Naive thymus-derived CD4-positive, alpha-beta T cell (primary cell): ENCODE measurements at regions of chr14 and their contacts with region 1.

Region 1: GRCh38 chr14:95157327-95158189 is at the start of gene DICER1:
- DNase-seq: peak; percentile 84 to 98 (median 93)
- ATAC-seq: peak; percentile 92
- H3K4me3 ChIP-seq: peak within 1 kb of the TSS; percentile 87
- H3K4me3 Mint-ChIP-seq: peak within 1 kb of the TSS; percentile 94 to 99 (median 98)
- H3K27ac ChIP-seq: peak within 1 kb of the TSS; percentile 82
- H3K27ac Mint-ChIP-seq: peak within 1 kb of the TSS; percentile 97 to 100 (median 99)
- H3K4me1 ChIP-seq: peaks cover 31 to 36% of the 10 kb centered on the region in 2 donors
- H3K4me1 Mint-ChIP-seq: peaks cover 32 to 55% (median 42%) of the 10 kb centered on the region in 7 donors
- H3K27me3 ChIP-seq: no peaks in the 10 kb centered on the region
- H3K27me3 Mint-ChIP-seq: no peaks in the 10 kb centered on the region
- total RNA-seq, gene DICER1: 61.1 to 78.2 (median 67.4) TPM

Region 2: DNA sequence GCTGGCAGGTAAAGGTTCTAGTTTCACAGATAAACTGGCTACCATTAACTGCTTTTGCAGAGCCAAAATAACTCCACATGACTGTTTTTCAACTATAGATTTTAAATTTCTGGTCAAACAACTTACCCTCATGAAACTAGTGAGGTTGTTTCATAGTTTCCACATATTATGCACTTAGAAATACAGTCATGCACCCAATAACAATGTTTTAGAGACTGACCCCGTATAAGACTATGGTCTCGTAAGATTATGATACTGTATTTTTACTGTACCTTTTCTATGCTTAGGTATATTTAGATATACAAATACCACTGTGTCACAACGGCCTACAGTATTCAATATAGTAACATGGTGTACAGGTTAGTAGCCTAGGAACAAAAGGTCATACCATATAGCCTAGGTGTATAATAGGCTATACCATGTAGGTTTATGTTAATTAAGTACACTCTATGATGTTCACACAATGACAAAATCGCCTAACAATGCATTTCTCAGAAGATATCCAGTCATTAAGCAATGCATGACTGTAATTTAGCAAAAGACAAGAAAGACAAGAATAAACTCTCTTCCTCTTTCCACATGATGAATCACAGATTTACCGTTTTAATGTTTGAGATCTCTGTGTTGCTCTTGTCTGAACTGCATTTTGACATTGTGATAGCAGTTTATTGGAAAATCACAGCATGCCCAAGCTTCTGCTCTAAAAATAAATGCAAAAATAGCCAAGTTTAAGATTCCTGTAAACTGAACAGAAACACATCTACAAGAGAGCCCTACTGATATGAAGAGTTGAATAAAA is 17.3 kb before region 1 on chr14:
- CTCF ChIA-PET with region 1: no interaction called
- POLR2A ChIA-PET with region 1: interaction called, 3 read pairs
- intact Hi-C with region 1: loop called in 1 of 2 experiments (anchors 2 kb)
- DNase-seq: no peak
- ATAC-seq: peak; percentile 53
- H3K4me3 ChIP-seq: no peak overlapping the region
- H3K4me3 Mint-ChIP-seq: peak overlapping the region in 3 of 10 donors; percentile 20 to 44 (median 26)
- H3K27ac ChIP-seq: no peak overlapping the region
- H3K27ac Mint-ChIP-seq: peak overlapping the region in 1 of 9 donors; percentile 12
- H3K4me1 ChIP-seq: peaks cover 4 to 29% of the 10 kb centered on the region in 2 donors
- H3K4me1 Mint-ChIP-seq: peaks cover 40 to 95% (median 91%) of the 10 kb centered on the region in 7 donors
- H3K27me3 ChIP-seq: no peaks in the 10 kb centered on the region
- H3K27me3 Mint-ChIP-seq: no peaks in the 10 kb centered on the region

Region 3: GRCh38 chr14:95206534-95206933 is 49.0 kb after region 1 on chr14:
- CTCF ChIA-PET with region 1: no interaction called
- POLR2A ChIA-PET with region 1: no interaction called
- intact Hi-C with region 1: no loop called
- DNase-seq: no peak
- ATAC-seq: no peak
- H3K4me3 ChIP-seq: no peak overlapping the region
- H3K4me3 Mint-ChIP-seq: no peak overlapping the region
- H3K27ac ChIP-seq: no peak overlapping the region
- H3K27ac Mint-ChIP-seq: no peak overlapping the region
- H3K4me1 ChIP-seq: no peaks in the 10 kb centered on the region
- H3K4me1 Mint-ChIP-seq: no peaks in the 10 kb centered on the region
- H3K27me3 ChIP-seq: no peaks in the 10 kb centered on the region
- H3K27me3 Mint-ChIP-seq: peaks cover 0 to 12% (median 4%) of the 10 kb centered on the region in 5 donors

Region 4: GRCh38 chr14:95319312-95320021 is 161.9 kb after region 1 on chr14 and contains the start of gene CLMN:
- CTCF ChIA-PET with region 1: no interaction called
- POLR2A ChIA-PET with region 1: no interaction called
- intact Hi-C with region 1: loop called in 1 of 2 experiments (anchors 2 kb)
- DNase-seq: peak; percentile 9 to 52 (median 40)
- ATAC-seq: peak; percentile 84
- H3K4me3 ChIP-seq: peak within 1 kb of the TSS; percentile 59
- H3K4me3 Mint-ChIP-seq: peak within 1 kb of the TSS; percentile 47 to 94 (median 84)
- H3K27ac ChIP-seq: peak within 1 kb of the TSS; percentile 32
- H3K27ac Mint-ChIP-seq: peak within 1 kb of the TSS in 5 of 9 donors; percentile 2 to 91 (median 38)
- H3K4me1 ChIP-seq: no peaks in the 10 kb centered on the region
- H3K4me1 Mint-ChIP-seq: peaks cover 8 to 15% (median 12%) of the 10 kb centered on the region in 7 donors
- H3K27me3 ChIP-seq: peaks cover 0 to 7% of the 10 kb centered on the region in 2 donors
- H3K27me3 Mint-ChIP-seq: peaks cover 10 to 51% (median 20%) of the 10 kb centered on the region in 5 donors
- total RNA-seq, gene CLMN: 0.43 to 6.8 (median 0.70) TPM